Left colon (tissue), 2 donors: ENCODE measurements at regions of chr4 and their contacts with region 1.

Region 1: GRCh38 chr4:15665753-15666365 is 10.7 kb upstream of the FBXL5 start:
- DNase-seq: peak in 1 of 2 donors; percentile 44
- ATAC-seq: peak; percentile 98

Region 2: GRCh38 chr4:15001869-15002658 is 663.8 kb before region 1 on chr4 and contains the start of gene CPEB2:
- intact Hi-C with region 1: loop called in 1 of 2 experiments (anchors 10 kb)
- DNase-seq: peak; percentile 94 to 96
- ATAC-seq: peak; percentile 75
- total RNA-seq, gene CPEB2: 24.7 to 33.2 TPM

Region 3: DNA sequence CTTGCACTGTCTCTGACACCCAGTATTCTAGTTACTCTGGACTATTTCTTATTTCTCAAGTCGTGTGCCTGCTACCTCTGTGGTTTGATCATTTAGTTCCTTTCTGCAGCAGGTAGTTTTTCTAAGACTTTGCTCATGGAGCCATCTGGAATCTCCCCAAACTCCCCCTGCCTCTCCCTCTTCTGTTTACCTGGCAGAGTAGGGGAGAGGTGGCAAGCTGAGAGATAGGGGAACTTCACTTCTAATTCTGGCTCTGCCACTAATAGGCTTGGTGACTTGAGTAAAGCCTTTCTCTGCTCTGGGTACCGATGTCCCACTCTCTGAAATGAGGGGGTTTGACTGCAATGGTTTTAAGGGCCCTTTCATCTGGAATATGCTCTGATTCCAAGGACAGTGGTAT is 522.3 kb before region 1 on chr4:
- intact Hi-C with region 1: no loop called
- DNase-seq: no peak
- ATAC-seq: no peak